ENCODE measurements at regions of chr10 and their contacts with region 1.

Region 1: GRCh38 chr10:74826142-74827044 is at the start of gene KAT6B:
- DNase-seq: peak; percentile 100
- H3K4me3 ChIP-seq: peak within 1 kb of the TSS; percentile 61 to 99 (median 91)
- H3K27ac ChIP-seq: peak within 1 kb of the TSS; percentile 92 to 100 (median 99)
- H3K27me3 ChIP-seq: no peaks in the 10 kb centered on the region
- CTCF ChIP-seq: peak in 22 of 56 donors; percentile 8 to 41 (median 20)
- total RNA-seq, gene KAT6B: 52.1 to 147 (median 101) TPM

Region 2: DNA sequence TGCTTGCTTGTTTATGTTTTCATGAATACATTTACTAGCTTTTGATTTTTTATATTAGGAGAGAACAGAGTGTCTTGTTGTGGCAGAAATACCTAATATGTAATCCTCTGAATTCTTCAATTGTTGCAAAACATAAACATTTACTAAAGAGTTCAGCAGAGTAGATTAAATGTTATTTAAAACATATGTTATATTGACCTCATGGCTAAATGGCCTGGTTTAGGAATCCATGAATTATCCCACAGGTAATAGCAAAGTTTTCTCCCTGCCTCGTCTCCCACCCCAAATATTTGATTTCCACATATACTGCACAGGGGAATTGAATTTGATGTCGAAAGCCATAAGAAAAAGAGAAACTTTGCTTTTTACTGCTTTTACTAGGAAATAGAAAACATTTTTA is 563.5 kb before region 1 on chr10:
- intact Hi-C with region 1: loop called (anchors 5 to 10 kb)
- DNase-seq: no peak
- H3K4me3 ChIP-seq: no peak overlapping the region
- H3K27ac ChIP-seq: no peak overlapping the region
- H3K27me3 ChIP-seq: no peaks in the 10 kb centered on the region
- CTCF ChIP-seq: no peak

Region 3: DNA sequence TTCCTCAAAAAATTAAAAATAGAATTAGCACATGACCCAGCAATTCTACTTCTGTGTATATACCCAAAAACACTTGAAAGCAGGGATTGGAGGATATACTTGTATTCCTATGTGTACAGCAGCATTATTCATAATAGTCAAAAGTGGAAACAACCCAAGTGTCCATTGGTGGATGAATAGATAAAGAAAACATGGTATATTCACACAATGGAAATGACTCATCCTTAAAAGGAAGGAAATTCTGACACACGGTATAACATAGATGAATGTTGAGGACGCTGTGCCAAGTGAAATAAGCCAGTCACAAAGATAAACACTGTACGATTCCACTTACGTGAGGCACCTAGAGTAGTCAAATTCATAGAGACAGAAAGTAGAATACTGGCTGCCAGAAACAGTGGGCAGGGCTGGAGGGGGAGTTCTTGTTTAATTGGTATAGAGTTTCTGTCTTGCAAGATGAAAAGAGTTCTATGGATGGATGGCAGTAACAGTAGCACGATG is 26.6 kb before region 1 on chr10:
- intact Hi-C with region 1: no loop called
- DNase-seq: no peak
- H3K4me3 ChIP-seq: no peak overlapping the region
- H3K27ac ChIP-seq: no peak overlapping the region
- H3K27me3 ChIP-seq: no peaks in the 10 kb centered on the region
- CTCF ChIP-seq: no peak

Region 4: DNA sequence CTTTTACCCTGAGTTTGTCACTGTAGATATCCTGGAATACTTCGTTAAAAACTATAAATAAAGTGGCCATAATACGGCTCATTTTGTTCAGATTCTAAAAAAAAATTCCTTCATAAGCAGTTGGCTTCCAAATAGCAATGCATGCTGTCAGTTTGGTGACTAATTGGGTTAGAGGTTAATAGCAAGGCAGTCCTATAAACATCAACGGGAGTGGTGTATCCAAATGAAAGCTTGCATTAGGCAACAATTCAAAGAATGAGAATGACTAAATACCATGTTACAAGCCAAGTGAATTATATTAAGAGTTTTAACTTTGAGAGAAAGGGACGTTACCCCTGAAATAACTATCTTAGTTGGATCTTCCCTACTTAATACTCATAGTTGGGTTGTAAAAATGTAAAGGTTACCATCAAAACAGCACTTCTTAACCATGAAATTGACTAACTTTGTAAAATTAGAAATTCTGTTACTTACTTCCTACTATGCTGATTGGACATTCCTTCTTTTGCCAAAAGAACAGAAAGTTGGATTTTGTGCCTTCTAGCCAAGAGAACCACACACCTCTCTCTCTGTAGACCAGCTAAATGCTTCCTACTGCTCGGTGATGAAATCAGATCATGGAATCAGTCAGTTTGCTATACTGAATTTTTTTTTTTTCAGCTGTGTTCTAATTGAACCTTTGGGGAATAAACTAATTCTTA is 98.0 kb after region 1 on chr10:
- intact Hi-C with region 1: loop called (anchors 5 to 10 kb)
- DNase-seq: no peak
- H3K4me3 ChIP-seq: peak overlapping the region in 2 of 59 donors; percentile 4 to 9
- H3K27ac ChIP-seq: peak overlapping the region in 49 of 59 donors; percentile 21 to 89 (median 63)
- H3K27me3 ChIP-seq: no peaks in the 10 kb centered on the region
- CTCF ChIP-seq: no peak

Region 5: GRCh38 chr10:75111367-75111906 is 285.0 kb after region 1 on chr10 and contains the start of gene SAMD8:
- intact Hi-C with region 1: loop called (anchors 1 to 2 kb)
- DNase-seq: peak; percentile 89 to 95 (median 93)
- H3K4me3 ChIP-seq: peak within 1 kb of the TSS; percentile 66 to 98 (median 91)
- H3K27ac ChIP-seq: peak within 1 kb of the TSS; percentile 85 to 99 (median 97)
- H3K27me3 ChIP-seq: no peaks in the 10 kb centered on the region
- CTCF ChIP-seq: peak in 54 of 56 donors; percentile 40 to 83 (median 68)
- total RNA-seq, gene SAMD8: 55.2 to 91.8 (median 66.8) TPM

Region 6: GRCh38 chr10:75235375-75236177 is 409.2 kb after region 1 on chr10 and contains the start of gene COMTD1:
- intact Hi-C with region 1: loop called in 1 of 2 experiments (anchors 5 kb)
- DNase-seq: peak; percentile 79 to 95 (median 90)
- H3K4me3 ChIP-seq: peak within 1 kb of the TSS; percentile 67 to 97 (median 79)
- H3K27ac ChIP-seq: peak within 1 kb of the TSS in 58 of 59 donors; percentile 18 to 89 (median 74)
- H3K27me3 ChIP-seq: no peaks in the 10 kb centered on the region
- CTCF ChIP-seq: peak; percentile 98 to 100 (median 100)
- total RNA-seq, gene COMTD1: 3.0 to 19.0 (median 10.2) TPM

Measured in dorsolateral prefrontal cortex (tissue), 120 donors.